PC-3 (cell line): ENCODE measurements at regions of chr7 and their contacts with region 1.

Region 1: GRCh38 chr7:41189866-41190265 is 513.0 kb downstream of the INHBA start:
- DNase-seq: peak; percentile 96
- ATAC-seq: peak; percentile 69
- H3K4me3 ChIP-seq: no peak overlapping the region
- H3K27ac ChIP-seq: peak overlapping the region; percentile 99
- H3K4me1 ChIP-seq: peaks cover 62% of the 10 kb centered on the region
- H3K27me3 ChIP-seq: no peaks in the 10 kb centered on the region
- CTCF ChIP-seq: no peak

Region 2: DNA sequence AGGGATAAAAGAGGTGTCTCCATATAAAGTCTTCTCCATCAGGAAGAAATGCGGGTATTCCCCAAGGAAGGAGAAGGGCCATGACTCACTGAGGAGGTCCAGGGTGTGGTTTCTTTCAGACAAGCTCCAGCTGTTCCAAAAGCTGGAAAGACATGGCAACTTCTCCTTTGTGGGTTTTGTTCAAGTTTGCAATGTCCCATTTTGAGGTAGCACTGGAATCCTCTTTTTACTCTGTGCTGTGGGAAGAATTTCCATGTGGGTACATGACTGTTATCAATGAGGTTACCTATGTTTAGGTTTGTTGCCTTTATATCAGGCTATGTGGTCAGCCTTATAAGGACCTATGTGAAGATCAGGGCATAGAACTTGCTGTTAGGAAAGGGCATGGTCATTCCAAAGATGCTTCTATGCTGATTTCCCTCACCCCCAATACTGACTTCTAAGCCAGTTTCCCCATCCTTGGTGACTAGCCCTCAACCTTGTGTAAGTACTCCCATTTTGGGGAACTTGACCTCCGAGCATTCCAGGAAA is 184.4 kb before region 1 on chr7:
- CTCF ChIA-PET with region 1: no interaction called
- POLR2A ChIA-PET with region 1: no interaction called
- intact Hi-C with region 1: loop called (anchors 2 kb)
- DNase-seq: peak; percentile 81
- ATAC-seq: peak; percentile 43
- H3K4me3 ChIP-seq: no peak overlapping the region
- H3K27ac ChIP-seq: peak overlapping the region; percentile 84
- H3K4me1 ChIP-seq: peaks cover 54% of the 10 kb centered on the region
- H3K27me3 ChIP-seq: no peaks in the 10 kb centered on the region
- CTCF ChIP-seq: no peak

Region 3: GRCh38 chr7:41107668-41108448 is 82.0 kb before region 1 on chr7:
- CTCF ChIA-PET with region 1: no interaction called
- POLR2A ChIA-PET with region 1: interaction called, 5 read pairs
- intact Hi-C with region 1: loop called (anchors 2 kb)
- DNase-seq: peak; percentile 98
- ATAC-seq: peak; percentile 92
- H3K4me3 ChIP-seq: peak overlapping the region; percentile 48; the same call in 1 of the 2 replicates
- H3K27ac ChIP-seq: peak overlapping the region; percentile 100
- H3K4me1 ChIP-seq: peaks cover 51% of the 10 kb centered on the region
- H3K27me3 ChIP-seq: no peaks in the 10 kb centered on the region
- CTCF ChIP-seq: no peak

Region 4: GRCh38 chr7:41206267-41206666 is 16.4 kb after region 1 on chr7:
- CTCF ChIA-PET with region 1: no interaction called
- POLR2A ChIA-PET with region 1: no interaction called
- intact Hi-C with region 1: no loop called
- DNase-seq: no peak
- ATAC-seq: no peak
- H3K4me3 ChIP-seq: no peak overlapping the region
- H3K27ac ChIP-seq: no peak overlapping the region
- H3K4me1 ChIP-seq: peaks cover 5% of the 10 kb centered on the region; the same call in 1 of the 2 replicates
- H3K27me3 ChIP-seq: no peaks in the 10 kb centered on the region
- CTCF ChIP-seq: no peak

Region 5: GRCh38 chr7:41224063-41224806 is 34.4 kb after region 1 on chr7:
- CTCF ChIA-PET with region 1: no interaction called
- POLR2A ChIA-PET with region 1: no interaction called
- intact Hi-C with region 1: loop called (anchors 1 kb)
- DNase-seq: peak; percentile 98
- ATAC-seq: peak; percentile 85
- H3K4me3 ChIP-seq: no peak overlapping the region
- H3K27ac ChIP-seq: peak overlapping the region; percentile 98
- H3K4me1 ChIP-seq: peaks cover 38% of the 10 kb centered on the region
- H3K27me3 ChIP-seq: no peaks in the 10 kb centered on the region
- CTCF ChIP-seq: no peak

Region 6: DNA sequence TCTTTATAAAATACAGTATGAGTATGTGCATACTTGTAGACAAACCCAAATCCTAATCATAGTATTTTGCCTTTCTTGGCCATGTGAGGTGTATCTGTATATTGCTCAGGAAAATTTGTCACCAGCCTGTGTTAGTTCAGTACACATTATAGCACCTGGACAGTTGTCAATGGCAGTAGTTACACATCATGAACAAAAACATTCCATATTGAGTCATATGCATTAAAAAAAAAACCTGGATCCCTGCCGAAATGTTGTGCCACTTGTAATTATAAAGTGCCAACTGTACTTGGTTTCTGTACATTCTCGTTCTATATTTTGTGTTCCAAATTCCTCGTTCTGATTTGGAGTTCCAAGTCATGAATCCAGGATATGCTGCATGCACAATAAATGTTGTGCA is 102.6 kb after region 1 on chr7:
- CTCF ChIA-PET with region 1: no interaction called
- POLR2A ChIA-PET with region 1: no interaction called
- intact Hi-C with region 1: loop called (anchors 1 kb)
- DNase-seq: peak; percentile 93
- ATAC-seq: peak; percentile 99
- H3K4me3 ChIP-seq: no peak overlapping the region
- H3K27ac ChIP-seq: peak overlapping the region; percentile 28
- H3K4me1 ChIP-seq: peaks cover 15% of the 10 kb centered on the region
- H3K27me3 ChIP-seq: no peaks in the 10 kb centered on the region
- CTCF ChIP-seq: no peak

Region 7: DNA sequence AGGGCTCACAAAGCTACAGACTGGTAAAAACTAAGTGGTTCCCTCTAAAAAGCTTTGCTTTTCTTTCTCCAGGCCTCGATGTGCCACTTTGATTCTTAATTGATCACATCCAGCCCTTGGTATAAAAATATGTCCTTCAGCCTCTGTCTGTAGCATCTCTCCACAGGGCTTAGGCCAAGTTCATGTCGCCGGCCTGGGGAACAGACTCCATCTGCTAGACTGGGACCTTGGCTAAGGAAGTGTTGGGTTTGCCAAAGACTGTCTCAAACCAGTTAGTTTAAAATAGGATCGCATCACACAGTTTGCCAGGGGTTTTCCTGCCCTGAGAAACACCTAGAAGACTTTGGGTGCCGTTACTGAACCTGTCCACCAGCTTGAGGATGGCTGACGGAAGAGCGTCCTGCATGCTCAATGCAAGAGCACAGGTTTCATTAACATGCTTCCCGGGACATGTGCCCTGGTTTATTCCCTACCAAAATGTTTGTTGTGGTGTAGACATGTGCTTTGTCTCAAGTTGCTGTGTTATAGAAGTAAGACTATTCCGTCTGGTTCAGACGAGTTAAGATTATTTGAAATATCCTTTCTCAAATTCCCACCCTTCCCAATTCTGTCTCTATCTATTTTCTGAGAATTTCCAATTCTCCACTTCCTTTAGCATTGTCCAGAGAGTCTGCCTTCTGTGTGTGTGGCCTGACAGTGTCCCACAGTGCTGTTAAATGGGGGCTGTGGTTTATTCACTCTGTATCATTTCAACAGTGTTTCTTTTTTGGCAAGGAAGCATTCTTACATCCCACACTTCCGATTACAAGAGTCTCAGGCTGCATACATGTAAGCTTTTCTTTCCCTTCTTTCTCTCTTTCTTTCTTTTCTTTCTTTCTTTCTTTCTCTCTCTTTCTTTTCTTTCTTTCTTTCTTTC is 178.4 kb after region 1 on chr7:
- CTCF ChIA-PET with region 1: no interaction called
- POLR2A ChIA-PET with region 1: no interaction called
- intact Hi-C with region 1: no loop called
- DNase-seq: no peak
- ATAC-seq: no peak
- H3K4me3 ChIP-seq: no peak overlapping the region
- H3K27ac ChIP-seq: no peak overlapping the region
- H3K4me1 ChIP-seq: no peaks in the 10 kb centered on the region
- H3K27me3 ChIP-seq: no peaks in the 10 kb centered on the region
- CTCF ChIP-seq: no peak

Region 8: GRCh38 chr7:41696314-41696916 is 506.5 kb after region 1 on chr7:
- CTCF ChIA-PET with region 1: no interaction called
- POLR2A ChIA-PET with region 1: no interaction called
- intact Hi-C with region 1: loop called (anchors 2 kb)
- DNase-seq: peak; percentile 88
- ATAC-seq: peak; percentile 56
- H3K4me3 ChIP-seq: peak overlapping the region; percentile 95
- H3K27ac ChIP-seq: peak overlapping the region; percentile 94
- H3K4me1 ChIP-seq: peaks cover 27% of the 10 kb centered on the region
- H3K27me3 ChIP-seq: no peaks in the 10 kb centered on the region
- CTCF ChIP-seq: peak; percentile 90